ENCODE measurements at regions of chr12 and their contacts with region 1.

Region 1: DNA sequence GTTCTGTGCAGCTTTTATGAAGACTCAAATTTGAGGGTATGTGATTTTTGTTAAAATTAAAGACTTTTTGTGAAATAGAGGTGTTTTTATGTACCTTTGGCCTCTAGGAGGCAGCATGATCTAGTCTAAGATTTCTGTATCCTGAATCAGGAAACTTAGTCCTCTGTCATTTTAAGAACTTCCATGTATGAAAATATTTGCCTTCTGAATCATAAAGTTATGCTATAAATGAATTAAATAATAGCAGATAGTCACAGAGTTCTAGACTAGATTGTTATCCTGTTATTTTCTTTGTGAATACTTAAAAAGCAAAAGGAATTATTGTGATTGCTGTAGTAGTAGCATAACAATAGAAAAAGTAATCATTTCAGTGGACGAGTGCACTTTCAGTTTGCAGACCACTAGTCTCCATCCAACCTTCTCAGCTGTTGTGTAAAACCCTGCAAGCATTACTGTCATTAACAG is 56.3 kb downstream of the FGD4 start:
- DNase-seq: peak; percentile 58
- H3K4me3 ChIP-seq: peak overlapping the region; percentile 25 to 56 (median 50)
- H3K27ac ChIP-seq: peak overlapping the region; percentile 94
- H3K4me1 ChIP-seq: peaks cover 52% of the 10 kb centered on the region
- H3K27me3 ChIP-seq: no peaks in the 10 kb centered on the region
- CTCF ChIP-seq: peak; percentile 63 to 65

Region 2: GRCh38 chr12:32399337-32400113 is 56.1 kb before region 1 on chr12 and contains the start of gene FGD4:
- CTCF ChIA-PET with region 1: no interaction called
- dilution Hi-C with region 1: no loop called
- in situ Hi-C with region 1: no loop called
- intact Hi-C with region 1: loop called (anchors 1 kb)
- DNase-seq: peak; percentile 95
- H3K4me3 ChIP-seq: peak within 1 kb of the TSS; percentile 72 to 99 (median 93)
- H3K27ac ChIP-seq: peak within 1 kb of the TSS; percentile 90
- H3K4me1 ChIP-seq: peaks cover 21% of the 10 kb centered on the region
- H3K27me3 ChIP-seq: no peaks in the 10 kb centered on the region
- CTCF ChIP-seq: peak; percentile 15 to 58
- total RNA-seq, gene FGD4: 20.8 to 35.3 TPM

Region 3: GRCh38 chr12:32501835-32502333 is 46.2 kb after region 1 on chr12:
- CTCF ChIA-PET with region 1: no interaction called
- dilution Hi-C with region 1: no loop called
- in situ Hi-C with region 1: no loop called
- intact Hi-C with region 1: no loop called
- DNase-seq: peak; percentile 80
- H3K4me3 ChIP-seq: no peak overlapping the region
- H3K27ac ChIP-seq: peak overlapping the region; percentile 30
- H3K4me1 ChIP-seq: peaks cover 38% of the 10 kb centered on the region
- H3K27me3 ChIP-seq: no peaks in the 10 kb centered on the region
- CTCF ChIP-seq: no peak

Region 4: GRCh38 chr12:32659908-32660440 is 204.3 kb after region 1 on chr12:
- CTCF ChIA-PET with region 1: no interaction called
- dilution Hi-C with region 1: no loop called
- in situ Hi-C with region 1: loop called (anchors 5 to 10 kb)
- intact Hi-C with region 1: loop called (anchors 1 kb)
- DNase-seq: no peak
- H3K4me3 ChIP-seq: no peak overlapping the region
- H3K27ac ChIP-seq: no peak overlapping the region
- H3K4me1 ChIP-seq: no peaks in the 10 kb centered on the region
- H3K27me3 ChIP-seq: no peaks in the 10 kb centered on the region
- CTCF ChIP-seq: no peak

Region 5: GRCh38 chr12:32727237-32727636 is 271.6 kb after region 1 on chr12:
- CTCF ChIA-PET with region 1: no interaction called
- dilution Hi-C with region 1: loop called (anchors 5 kb)
- in situ Hi-C with region 1: no loop called
- intact Hi-C with region 1: no loop called
- DNase-seq: no peak
- H3K4me3 ChIP-seq: no peak overlapping the region
- H3K27ac ChIP-seq: no peak overlapping the region
- H3K4me1 ChIP-seq: no peaks in the 10 kb centered on the region
- H3K27me3 ChIP-seq: no peaks in the 10 kb centered on the region
- CTCF ChIP-seq: no peak

Region 6: GRCh38 chr12:33383503-33383902 is 927.9 kb after region 1 on chr12:
- CTCF ChIA-PET with region 1: no interaction called
- dilution Hi-C with region 1: no loop called
- in situ Hi-C with region 1: no loop called
- intact Hi-C with region 1: no loop called
- DNase-seq: no peak
- H3K4me3 ChIP-seq: no peak overlapping the region
- H3K27ac ChIP-seq: no peak overlapping the region
- H3K4me1 ChIP-seq: no peaks in the 10 kb centered on the region
- H3K27me3 ChIP-seq: no peaks in the 10 kb centered on the region
- CTCF ChIP-seq: no peak

Measured in mammary epithelial cell (primary cell).